Naive thymus-derived CD4-positive, alpha-beta T cell (primary cell): ENCODE measurements at regions of chr6 and their contacts with region 1.

Region 1: DNA sequence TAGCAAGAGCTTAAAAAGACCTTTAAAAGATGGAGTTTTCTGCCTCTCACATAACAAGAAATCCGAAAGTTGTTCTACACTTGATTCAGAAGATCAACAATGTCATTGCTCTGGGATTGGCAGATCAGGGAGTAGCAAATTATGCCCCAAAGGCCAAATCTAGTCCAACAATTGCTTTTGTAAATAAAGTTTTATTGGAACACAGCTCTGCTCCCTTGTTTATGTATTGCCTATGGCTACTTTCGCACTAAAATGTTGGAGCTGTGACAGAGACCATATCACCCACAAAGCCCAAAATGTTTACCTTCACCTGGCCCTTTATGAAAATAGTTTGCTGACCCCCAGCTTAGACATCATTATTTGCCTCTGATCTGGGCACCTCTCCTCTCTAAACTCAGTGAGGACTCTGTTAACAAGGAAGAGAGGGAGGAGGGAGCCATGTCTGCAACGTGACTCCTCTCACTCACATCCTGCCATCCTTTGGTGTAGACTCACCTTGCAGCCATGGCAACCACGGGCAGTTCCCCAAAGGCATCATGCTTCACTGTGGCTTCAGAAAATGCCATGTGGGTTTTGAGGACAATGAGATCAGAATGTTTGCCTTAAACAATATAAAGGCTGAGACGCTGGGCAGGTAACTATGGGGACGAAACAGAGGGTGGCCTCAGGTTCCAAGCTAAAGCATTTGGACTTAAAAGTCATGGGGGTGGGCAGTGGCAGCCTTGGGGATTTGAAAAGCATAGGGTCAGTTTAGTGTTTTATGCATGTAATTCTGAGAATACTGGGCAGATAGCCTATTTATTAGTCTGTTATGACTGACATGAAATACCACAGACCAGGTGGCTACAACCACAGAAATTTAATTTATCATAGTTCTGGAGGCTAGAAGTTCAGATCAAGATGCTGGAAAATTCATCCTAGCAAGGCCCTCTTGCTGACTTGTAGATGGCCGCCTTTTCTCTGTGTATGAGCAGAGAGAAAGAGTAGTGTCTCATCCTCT is 149.7 kb upstream of the TNFAIP3 start:
- DNase-seq: peak; percentile 44 to 85 (median 76)
- ATAC-seq: peak; percentile 74
- H3K4me3 ChIP-seq: no peak overlapping the region
- H3K4me3 Mint-ChIP-seq: peak overlapping the region in 8 of 10 donors; percentile 1 to 76 (median 23)
- H3K27ac ChIP-seq: peak overlapping the region; percentile 65
- H3K27ac Mint-ChIP-seq: peak overlapping the region; percentile 56 to 96 (median 93)
- H3K4me1 ChIP-seq: peaks cover 17 to 36% of the 10 kb centered on the region in 2 donors
- H3K4me1 Mint-ChIP-seq: peaks cover 23 to 65% (median 40%) of the 10 kb centered on the region in 7 donors
- H3K27me3 ChIP-seq: no peaks in the 10 kb centered on the region
- H3K27me3 Mint-ChIP-seq: no peaks in the 10 kb centered on the region

Region 2: DNA sequence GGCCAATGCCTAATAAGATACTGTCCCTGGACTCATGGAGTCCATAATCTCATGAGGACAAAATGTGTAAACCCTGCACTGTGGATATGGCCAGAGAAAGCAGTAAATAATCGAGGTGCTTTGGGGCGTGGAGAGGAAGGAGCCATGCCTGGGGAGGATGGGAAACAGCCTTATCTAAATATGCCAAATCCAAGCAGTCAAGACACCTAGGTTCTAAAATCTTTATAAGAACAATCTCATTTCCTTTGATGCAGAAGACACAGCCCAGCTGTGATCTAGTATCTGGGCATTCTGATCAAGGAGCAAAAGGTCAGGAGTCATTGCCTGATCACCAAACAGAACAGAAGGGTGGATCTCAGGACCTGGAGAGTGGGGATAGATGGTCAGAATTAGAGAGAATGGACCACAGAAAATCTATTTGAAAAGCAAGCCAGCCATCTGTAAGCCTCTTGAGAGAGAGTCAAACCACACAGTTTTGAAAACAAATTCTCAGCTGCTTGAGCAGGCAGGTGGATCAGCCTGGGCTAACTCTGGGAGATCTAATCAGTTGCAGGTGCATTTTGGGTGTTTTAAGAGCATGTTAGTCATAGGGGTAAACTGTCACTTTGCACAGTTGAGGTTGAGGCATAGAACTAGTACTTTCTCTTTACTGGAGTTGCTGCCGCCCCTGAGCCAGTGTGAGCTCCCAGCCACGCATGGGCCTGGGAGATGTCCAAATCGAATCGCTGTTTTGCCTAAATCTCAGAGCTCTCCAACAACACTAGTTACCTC is 18.9 kb after region 1 on chr6:
- CTCF ChIA-PET with region 1: no interaction called
- POLR2A ChIA-PET with region 1: no interaction called
- intact Hi-C with region 1: loop called in 1 of 2 experiments (anchors 2 kb)
- DNase-seq: peak in 4 of 9 donors; percentile 18 to 27 (median 24)
- ATAC-seq: peak; percentile 70
- H3K4me3 ChIP-seq: no peak overlapping the region
- H3K4me3 Mint-ChIP-seq: peak overlapping the region in 2 of 10 donors; percentile 33 to 46
- H3K27ac ChIP-seq: no peak overlapping the region
- H3K27ac Mint-ChIP-seq: peak overlapping the region in 8 of 9 donors; percentile 20 to 91 (median 78)
- H3K4me1 ChIP-seq: peaks cover 3 to 7% of the 10 kb centered on the region in 2 donors
- H3K4me1 Mint-ChIP-seq: peaks cover 6 to 27% (median 9%) of the 10 kb centered on the region in 7 donors
- H3K27me3 ChIP-seq: no peaks in the 10 kb centered on the region
- H3K27me3 Mint-ChIP-seq: peaks cover 0 to 12% (median 2%) of the 10 kb centered on the region in 5 donors

Region 3: GRCh38 chr6:137791281-137792159 is 74.1 kb after region 1 on chr6:
- CTCF ChIA-PET with region 1: interaction called, 3 read pairs
- POLR2A ChIA-PET with region 1: interaction called, 4 read pairs
- intact Hi-C with region 1: loop called in 1 of 2 experiments (anchors 1 kb)
- DNase-seq: peak in 1 of 9 donors; percentile 26
- ATAC-seq: no peak
- H3K4me3 ChIP-seq: no peak overlapping the region
- H3K4me3 Mint-ChIP-seq: peak overlapping the region in 1 of 10 donors; percentile 45
- H3K27ac ChIP-seq: no peak overlapping the region
- H3K27ac Mint-ChIP-seq: peak overlapping the region in 8 of 9 donors; percentile 1 to 79 (median 36)
- H3K4me1 ChIP-seq: peaks cover 7 to 28% of the 10 kb centered on the region in 2 donors
- H3K4me1 Mint-ChIP-seq: peaks cover 27 to 65% (median 50%) of the 10 kb centered on the region in 7 donors
- H3K27me3 ChIP-seq: no peaks in the 10 kb centered on the region
- H3K27me3 Mint-ChIP-seq: no peaks in the 10 kb centered on the region

Region 4: DNA sequence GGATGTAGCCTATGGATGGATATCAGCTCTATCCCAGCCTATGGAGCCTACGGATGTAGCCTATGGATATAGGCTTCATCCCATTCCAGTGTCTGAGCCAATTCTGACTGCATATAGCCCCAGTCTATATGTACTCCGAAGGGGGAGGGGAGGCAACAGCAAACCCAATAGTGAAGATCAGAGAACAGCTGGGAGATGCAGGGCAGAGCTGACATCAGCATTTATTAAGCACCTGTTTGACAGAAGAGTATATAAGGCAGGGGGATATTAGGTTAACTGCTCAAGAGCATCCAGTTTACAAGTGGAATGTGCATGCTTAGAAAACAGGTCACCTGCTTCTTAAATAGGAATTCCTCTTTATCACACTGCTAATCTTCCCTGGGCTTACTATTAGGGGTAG is 234.9 kb after region 1 on chr6:
- CTCF ChIA-PET with region 1: no interaction called
- POLR2A ChIA-PET with region 1: no interaction called
- intact Hi-C with region 1: no loop called
- DNase-seq: no peak
- ATAC-seq: no peak
- H3K4me3 ChIP-seq: no peak overlapping the region
- H3K4me3 Mint-ChIP-seq: no peak overlapping the region
- H3K27ac ChIP-seq: no peak overlapping the region
- H3K27ac Mint-ChIP-seq: no peak overlapping the region
- H3K4me1 ChIP-seq: peaks cover 8 to 13% of the 10 kb centered on the region in 2 donors
- H3K4me1 Mint-ChIP-seq: peaks cover 10 to 22% (median 14%) of the 10 kb centered on the region in 7 donors
- H3K27me3 ChIP-seq: no peaks in the 10 kb centered on the region
- H3K27me3 Mint-ChIP-seq: peaks cover 0 to 2% (median 0%) of the 10 kb centered on the region in 5 donors